ENCODE measurements at regions of chr2 and their contacts with region 1.

Region 1: DNA sequence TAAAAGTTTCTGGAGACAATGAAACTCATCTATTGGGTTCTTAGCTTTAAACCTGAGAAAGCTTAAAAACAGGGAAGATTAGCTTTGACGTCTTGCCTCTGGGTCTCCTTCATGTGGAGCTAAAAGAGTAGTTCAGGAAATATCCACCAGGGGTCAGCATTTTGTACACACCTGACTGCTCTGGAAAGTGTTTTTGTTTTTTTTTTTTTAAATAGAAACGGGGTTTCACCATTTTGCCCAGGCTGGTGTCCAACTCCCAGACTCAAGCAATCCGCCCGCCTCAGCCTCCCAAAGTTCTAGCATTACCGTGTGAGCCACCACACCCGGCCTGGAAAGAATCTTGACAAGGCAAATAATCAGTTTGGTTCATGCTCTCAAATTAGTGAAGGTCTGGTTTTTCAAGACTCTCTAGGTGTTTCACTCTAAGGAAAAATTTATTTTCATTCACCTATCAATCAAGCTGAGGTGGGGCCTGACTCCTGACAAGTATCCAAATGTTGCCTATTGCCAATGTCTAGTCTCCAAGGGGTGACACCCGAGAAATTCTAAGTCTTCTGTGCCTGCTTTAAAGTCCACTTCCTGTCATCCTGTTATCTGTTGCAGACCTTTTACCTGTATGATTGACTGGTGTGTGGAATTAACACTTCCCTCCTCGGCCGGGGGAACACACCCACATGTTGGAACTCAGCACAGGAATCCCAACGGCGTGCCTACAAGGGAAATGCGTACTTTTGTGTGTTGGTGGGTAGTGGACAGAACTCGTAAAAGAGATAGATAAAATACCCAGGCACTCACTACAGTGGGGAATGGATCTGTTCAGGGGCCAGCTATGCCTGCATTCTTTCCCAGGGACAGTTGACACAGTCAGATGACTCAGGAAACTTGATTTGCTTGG is 11.3 kb downstream of the IL1RN start:
- DNase-seq: peak in 7 of 9 experiments; percentile 31 to 90 (median 64)
- ATAC-seq: peak; percentile 79
- H3K4me3 ChIP-seq: peak overlapping the region in 1 of 2 experiments; percentile 10
- H3K4me3 Mint-ChIP-seq: peak overlapping the region; percentile 62
- H3K27ac ChIP-seq: no peak overlapping the region
- H3K27ac Mint-ChIP-seq: peak overlapping the region; percentile 86
- H3K4me1 ChIP-seq: peaks cover 9% of the 10 kb centered on the region
- H3K4me1 Mint-ChIP-seq: peaks cover 22% of the 10 kb centered on the region
- H3K27me3 ChIP-seq: no peaks in the 10 kb centered on the region
- H3K27me3 Mint-ChIP-seq: no peaks in the 10 kb centered on the region
- CTCF ChIP-seq: peak; percentile 74

Region 2: DNA sequence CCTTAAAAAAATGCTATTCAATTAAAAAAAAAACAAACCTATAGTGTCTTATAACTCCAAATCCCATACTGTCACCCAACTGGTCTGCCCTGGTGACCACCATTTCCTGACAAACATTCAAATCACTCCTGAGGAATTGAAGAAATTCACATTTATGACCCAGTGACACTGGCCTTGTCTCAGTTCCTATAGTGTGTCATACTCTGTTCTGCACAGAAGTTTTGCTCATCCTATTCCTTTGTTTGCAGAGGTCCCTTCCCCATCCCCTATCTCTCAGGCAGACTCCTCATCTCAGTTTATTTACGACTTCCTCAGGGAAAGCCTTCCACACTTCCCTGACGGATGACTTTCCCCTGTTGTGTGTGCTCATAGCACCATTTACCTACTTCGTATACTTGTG is 848.6 kb before region 1 on chr2:
- CTCF ChIA-PET with region 1: no interaction called
- POLR2A ChIA-PET with region 1: no interaction called
- intact Hi-C with region 1: no loop called
- DNase-seq: no peak
- ATAC-seq: no peak
- H3K4me3 ChIP-seq: no peak overlapping the region
- H3K4me3 Mint-ChIP-seq: no peak overlapping the region
- H3K27ac ChIP-seq: no peak overlapping the region
- H3K27ac Mint-ChIP-seq: no peak overlapping the region
- H3K4me1 ChIP-seq: no peaks in the 10 kb centered on the region
- H3K4me1 Mint-ChIP-seq: peaks cover 15% of the 10 kb centered on the region
- H3K27me3 ChIP-seq: no peaks in the 10 kb centered on the region
- H3K27me3 Mint-ChIP-seq: no peaks in the 10 kb centered on the region
- CTCF ChIP-seq: no peak

Region 3: GRCh38 chr2:112941753-112942658 is 196.7 kb before region 1 on chr2:
- CTCF ChIA-PET with region 1: no interaction called
- POLR2A ChIA-PET with region 1: no interaction called
- intact Hi-C with region 1: no loop called
- DNase-seq: peak; percentile 22 to 79 (median 59)
- ATAC-seq: peak; percentile 66
- H3K4me3 ChIP-seq: no peak overlapping the region
- H3K4me3 Mint-ChIP-seq: no peak overlapping the region
- H3K27ac ChIP-seq: no peak overlapping the region
- H3K27ac Mint-ChIP-seq: no peak overlapping the region
- H3K4me1 ChIP-seq: no peaks in the 10 kb centered on the region
- H3K4me1 Mint-ChIP-seq: peaks cover 6% of the 10 kb centered on the region
- H3K27me3 ChIP-seq: no peaks in the 10 kb centered on the region
- H3K27me3 Mint-ChIP-seq: no peaks in the 10 kb centered on the region
- CTCF ChIP-seq: peak; percentile 62

Region 4: DNA sequence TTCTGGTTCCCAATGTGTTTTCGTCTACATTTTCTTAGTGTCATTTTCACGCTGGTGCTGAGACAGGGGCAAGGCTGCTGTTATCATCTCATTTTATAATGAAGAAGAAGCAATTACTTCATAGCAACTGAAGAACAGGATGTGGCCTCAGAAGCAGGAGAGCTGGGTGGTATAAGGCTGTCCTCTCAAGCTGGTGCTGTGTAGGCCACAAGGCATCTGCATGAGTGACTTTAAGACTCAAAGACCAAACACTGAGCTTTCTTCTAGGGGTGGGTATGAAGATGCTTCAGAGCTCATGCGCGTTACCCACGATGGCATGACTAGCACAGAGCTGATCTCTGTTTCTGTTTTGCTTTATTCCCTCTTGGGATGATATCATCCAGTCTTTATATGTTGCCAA is 153.6 kb before region 1 on chr2:
- CTCF ChIA-PET with region 1: interaction called, 9 read pairs
- POLR2A ChIA-PET with region 1: no interaction called
- intact Hi-C with region 1: loop called (anchors 2 to 5 kb)
- DNase-seq: peak in 8 of 9 experiments; percentile 12 to 78 (median 45)
- ATAC-seq: peak; percentile 97
- H3K4me3 ChIP-seq: no peak overlapping the region
- H3K4me3 Mint-ChIP-seq: peak overlapping the region; percentile 0
- H3K27ac ChIP-seq: peak overlapping the region; percentile 4 to 53
- H3K27ac Mint-ChIP-seq: peak overlapping the region; percentile 86
- H3K4me1 ChIP-seq: peaks cover 30% of the 10 kb centered on the region
- H3K4me1 Mint-ChIP-seq: peaks cover 25% of the 10 kb centered on the region
- H3K27me3 ChIP-seq: no peaks in the 10 kb centered on the region
- H3K27me3 Mint-ChIP-seq: no peaks in the 10 kb centered on the region
- CTCF ChIP-seq: no peak

Region 5: DNA sequence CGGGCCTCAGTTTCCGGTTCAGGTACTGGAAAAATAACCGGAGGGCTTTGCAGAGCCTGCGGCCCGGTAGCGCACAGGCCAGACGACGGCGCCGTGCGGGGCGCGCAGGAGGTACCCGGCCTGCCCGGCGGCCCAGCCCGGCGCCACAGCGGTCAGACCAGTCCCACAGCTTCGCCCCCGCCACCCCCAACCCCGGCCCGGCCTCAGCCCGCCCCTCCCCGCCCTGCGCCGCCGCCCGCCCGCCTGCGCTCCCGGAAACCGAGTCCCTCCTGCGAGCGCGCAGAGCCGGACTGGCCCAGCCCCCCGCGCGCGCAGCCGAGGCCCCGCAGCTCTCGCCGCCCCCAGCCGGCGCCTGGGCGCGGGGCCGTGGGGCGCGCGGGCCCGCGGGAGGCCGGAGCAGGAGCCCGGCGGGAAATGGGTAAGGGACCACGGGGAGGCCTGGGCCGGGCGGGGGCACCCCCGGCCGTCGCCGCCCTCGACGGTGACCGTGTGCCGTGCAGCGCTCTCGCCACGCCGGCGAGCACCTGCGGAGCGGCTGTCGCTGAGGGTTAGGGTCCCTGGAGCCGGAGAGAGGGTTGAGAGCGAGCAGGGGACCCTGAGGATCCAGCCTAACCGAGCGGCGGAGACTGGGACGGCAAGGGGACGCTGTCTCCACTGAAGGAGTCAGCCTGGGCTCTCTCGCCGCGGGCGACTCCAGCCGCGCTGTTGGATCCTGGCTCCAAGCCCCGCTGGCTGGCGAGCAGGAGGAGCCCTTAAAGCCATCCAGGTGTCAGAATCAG is 18.6 kb after region 1 on chr2:
- CTCF ChIA-PET with region 1: interaction called, 58 read pairs
- POLR2A ChIA-PET with region 1: interaction called, 10 read pairs
- intact Hi-C with region 1: loop called (anchors 2 kb)
- DNase-seq: peak in 7 of 9 experiments; percentile 34 to 75 (median 51)
- ATAC-seq: peak; percentile 83
- H3K4me3 ChIP-seq: peak overlapping the region; percentile 63 to 76
- H3K4me3 Mint-ChIP-seq: peak overlapping the region; percentile 91
- H3K27ac ChIP-seq: peak overlapping the region; percentile 21 to 55
- H3K27ac Mint-ChIP-seq: peak overlapping the region; percentile 91
- H3K4me1 ChIP-seq: peaks cover 20% of the 10 kb centered on the region
- H3K4me1 Mint-ChIP-seq: peaks cover 26% of the 10 kb centered on the region
- H3K27me3 ChIP-seq: no peaks in the 10 kb centered on the region
- H3K27me3 Mint-ChIP-seq: no peaks in the 10 kb centered on the region
- CTCF ChIP-seq: no peak

Region 6: DNA sequence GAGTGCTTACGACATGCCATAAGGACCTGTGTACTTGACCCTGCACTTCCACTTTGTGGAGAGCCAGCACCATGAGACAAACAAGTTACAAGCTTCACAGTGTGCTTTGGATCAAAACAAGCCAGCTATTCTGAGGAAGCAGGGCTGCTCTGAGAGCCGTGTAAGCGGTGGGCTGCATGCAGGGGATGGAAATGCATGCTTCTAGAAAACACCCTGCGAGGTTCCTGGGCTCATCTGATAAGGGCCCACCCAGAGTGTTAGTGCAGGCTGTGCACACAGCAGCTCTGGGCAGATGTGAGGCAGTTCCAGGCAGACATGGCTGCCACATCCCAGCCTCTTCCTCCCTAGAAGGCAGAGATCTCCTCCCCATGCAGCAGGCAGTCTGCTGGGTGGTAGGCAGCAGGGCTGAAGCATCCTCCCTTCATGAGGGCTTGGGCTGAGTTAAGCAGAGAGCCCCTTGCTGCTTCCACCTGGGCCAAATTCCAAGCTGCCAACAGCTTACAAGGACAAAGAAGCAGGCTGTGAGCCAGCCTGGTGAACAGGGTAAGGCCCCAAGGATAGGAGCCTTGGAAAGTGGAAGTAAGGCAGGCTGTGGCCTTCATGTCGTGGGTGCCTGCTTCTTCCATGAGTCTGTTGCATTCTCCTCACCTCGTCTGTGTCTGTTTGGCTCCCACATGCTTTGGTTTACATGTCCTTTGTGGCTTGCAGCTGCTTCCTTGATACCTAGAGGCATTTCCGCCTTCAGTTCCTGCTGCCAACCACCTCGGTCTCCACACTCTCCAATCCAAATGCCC is 42.8 kb after region 1 on chr2:
- CTCF ChIA-PET with region 1: interaction called, 127 read pairs
- POLR2A ChIA-PET with region 1: interaction called, 10 read pairs
- intact Hi-C with region 1: loop called (anchors 1 kb)
- DNase-seq: peak in 3 of 9 experiments; percentile 24 to 51 (median 32)
- ATAC-seq: peak; percentile 15
- H3K4me3 ChIP-seq: peak overlapping the region; percentile 2 to 4
- H3K4me3 Mint-ChIP-seq: peak overlapping the region; percentile 87
- H3K27ac ChIP-seq: peak overlapping the region; percentile 23 to 62
- H3K27ac Mint-ChIP-seq: peak overlapping the region; percentile 93
- H3K4me1 ChIP-seq: peaks cover 100% of the 10 kb centered on the region
- H3K4me1 Mint-ChIP-seq: peaks cover 96% of the 10 kb centered on the region
- H3K27me3 ChIP-seq: no peaks in the 10 kb centered on the region
- H3K27me3 Mint-ChIP-seq: no peaks in the 10 kb centered on the region
- CTCF ChIP-seq: no peak

Region 7: DNA sequence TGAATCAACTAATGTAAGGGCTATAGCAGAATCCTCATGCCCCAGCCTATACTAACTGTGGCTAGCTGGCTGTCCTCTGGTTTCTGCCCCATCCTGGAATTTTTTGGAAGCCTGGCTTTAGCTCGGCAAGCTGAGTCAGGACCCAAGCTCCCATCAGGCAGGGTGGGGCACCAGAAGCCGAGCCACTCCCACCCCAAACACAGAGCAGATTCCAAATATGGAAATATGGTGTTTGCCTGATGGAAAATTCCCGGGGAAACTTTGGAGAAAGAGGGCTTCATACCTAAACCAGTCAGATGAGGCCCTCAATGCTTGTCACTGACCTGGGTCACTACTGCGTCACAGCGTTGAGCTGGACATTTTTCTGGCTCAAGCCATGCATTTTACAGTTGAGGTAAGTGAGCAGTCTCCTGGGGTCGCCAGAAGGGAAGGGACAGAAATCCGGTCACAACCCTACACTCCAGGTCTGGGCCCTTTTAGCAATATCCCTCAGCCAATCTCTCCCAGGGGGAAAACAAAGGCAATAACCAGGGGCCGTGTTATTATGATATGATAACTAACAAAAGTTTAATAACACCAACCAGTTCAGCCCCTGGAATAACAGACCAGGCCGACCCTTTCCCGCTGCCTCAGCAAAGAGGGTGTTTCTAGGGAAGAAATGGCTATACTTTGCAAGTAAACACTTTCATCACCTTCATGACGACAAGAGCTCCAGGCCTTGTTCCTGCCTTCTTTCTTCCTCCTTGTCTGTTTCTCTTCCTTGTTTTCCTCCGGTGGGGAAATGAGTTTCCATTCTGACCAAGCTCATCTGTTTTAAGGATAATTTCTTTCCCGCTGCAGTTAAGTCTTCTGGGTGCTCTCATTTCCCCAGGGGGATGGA is 72.8 kb after region 1 on chr2:
- CTCF ChIA-PET with region 1: interaction called, 368 read pairs
- POLR2A ChIA-PET with region 1: interaction called, 3 read pairs
- intact Hi-C with region 1: no loop called
- DNase-seq: no peak
- ATAC-seq: no peak
- H3K4me3 ChIP-seq: no peak overlapping the region
- H3K4me3 Mint-ChIP-seq: no peak overlapping the region
- H3K27ac ChIP-seq: no peak overlapping the region
- H3K27ac Mint-ChIP-seq: no peak overlapping the region
- H3K4me1 ChIP-seq: no peaks in the 10 kb centered on the region
- H3K4me1 Mint-ChIP-seq: no peaks in the 10 kb centered on the region
- H3K27me3 ChIP-seq: no peaks in the 10 kb centered on the region
- H3K27me3 Mint-ChIP-seq: no peaks in the 10 kb centered on the region
- CTCF ChIP-seq: no peak

Region 8: GRCh38 chr2:113370478-113371091 is 231.9 kb after region 1 on chr2:
- CTCF ChIA-PET with region 1: interaction called, 59 read pairs
- POLR2A ChIA-PET with region 1: no interaction called
- intact Hi-C with region 1: loop called (anchors 1 kb)
- DNase-seq: peak; percentile 29 to 83 (median 65)
- ATAC-seq: peak; percentile 94
- H3K4me3 ChIP-seq: no peak overlapping the region
- H3K4me3 Mint-ChIP-seq: no peak overlapping the region
- H3K27ac ChIP-seq: no peak overlapping the region
- H3K27ac Mint-ChIP-seq: no peak overlapping the region
- H3K4me1 ChIP-seq: peaks cover 4% of the 10 kb centered on the region
- H3K4me1 Mint-ChIP-seq: peaks cover 5% of the 10 kb centered on the region
- H3K27me3 ChIP-seq: no peaks in the 10 kb centered on the region
- H3K27me3 Mint-ChIP-seq: peaks cover 3% of the 10 kb centered on the region
- CTCF ChIP-seq: peak; percentile 61